ENCODE measurements at regions of chr10 and their contacts with region 1.

Region 1: GRCh38 chr10:9091530-9092093 is 1037.1 kb downstream of the GATA3 start:
- DNase-seq: no peak
- H3K4me3 Mint-ChIP-seq: no peak overlapping the region
- H3K27ac Mint-ChIP-seq: peak overlapping the region; percentile 24
- H3K4me1 Mint-ChIP-seq: peaks cover 49% of the 10 kb centered on the region
- H3K27me3 Mint-ChIP-seq: no peaks in the 10 kb centered on the region

Region 2: GRCh38 chr10:8245131-8245813 is 846.3 kb before region 1 on chr10:
- intact Hi-C with region 1: loop called (anchors 5 kb)
- DNase-seq: no peak
- H3K4me3 Mint-ChIP-seq: peak overlapping the region; percentile 58
- H3K27ac Mint-ChIP-seq: peak overlapping the region; percentile 93
- H3K4me1 Mint-ChIP-seq: peaks cover 76% of the 10 kb centered on the region
- H3K27me3 Mint-ChIP-seq: no peaks in the 10 kb centered on the region

Region 3: GRCh38 chr10:8404391-8405120 is 687.1 kb before region 1 on chr10:
- intact Hi-C with region 1: loop called (anchors 5 kb)
- DNase-seq: peak; percentile 63
- H3K4me3 Mint-ChIP-seq: peak overlapping the region; percentile 75
- H3K27ac Mint-ChIP-seq: peak overlapping the region; percentile 98
- H3K4me1 Mint-ChIP-seq: peaks cover 80% of the 10 kb centered on the region
- H3K27me3 Mint-ChIP-seq: no peaks in the 10 kb centered on the region

Region 4: DNA sequence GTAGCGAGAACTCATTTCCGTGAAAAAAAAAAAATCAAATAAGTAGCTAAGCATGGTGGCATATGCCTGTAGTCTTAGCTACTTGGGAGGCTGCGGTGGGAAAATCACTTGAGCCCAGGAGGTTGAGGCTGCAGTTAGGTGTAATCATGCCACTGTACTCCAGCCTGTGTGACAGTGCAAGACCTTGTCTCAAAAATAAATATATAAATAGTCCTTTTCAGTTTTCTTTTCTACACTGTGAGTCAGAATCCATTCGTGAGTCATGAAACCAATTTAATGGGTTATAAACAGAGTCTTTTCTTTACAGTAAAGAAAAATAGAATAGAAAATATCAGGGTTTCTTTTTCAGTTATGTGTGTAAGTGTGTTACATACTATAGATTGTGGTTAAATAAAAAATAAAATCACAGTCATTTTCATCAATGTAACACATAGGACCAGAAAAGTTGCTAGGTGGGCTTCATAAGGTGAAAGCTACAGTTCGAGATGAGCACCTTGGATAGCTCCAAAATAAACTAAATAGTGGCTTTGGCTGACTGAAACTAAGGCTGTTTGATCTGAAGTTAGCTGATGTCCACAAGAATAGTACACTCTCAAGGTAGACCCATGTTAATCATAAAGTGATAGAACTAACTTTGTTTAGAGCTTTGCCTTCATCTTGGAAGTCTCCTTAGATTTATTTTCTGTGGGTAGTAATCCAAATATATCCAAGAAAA is 256.0 kb before region 1 on chr10:
- intact Hi-C with region 1: loop called (anchors 2 kb)
- DNase-seq: no peak
- H3K4me3 Mint-ChIP-seq: no peak overlapping the region
- H3K27ac Mint-ChIP-seq: no peak overlapping the region
- H3K4me1 Mint-ChIP-seq: peaks cover 36% of the 10 kb centered on the region
- H3K27me3 Mint-ChIP-seq: no peaks in the 10 kb centered on the region

Region 5: DNA sequence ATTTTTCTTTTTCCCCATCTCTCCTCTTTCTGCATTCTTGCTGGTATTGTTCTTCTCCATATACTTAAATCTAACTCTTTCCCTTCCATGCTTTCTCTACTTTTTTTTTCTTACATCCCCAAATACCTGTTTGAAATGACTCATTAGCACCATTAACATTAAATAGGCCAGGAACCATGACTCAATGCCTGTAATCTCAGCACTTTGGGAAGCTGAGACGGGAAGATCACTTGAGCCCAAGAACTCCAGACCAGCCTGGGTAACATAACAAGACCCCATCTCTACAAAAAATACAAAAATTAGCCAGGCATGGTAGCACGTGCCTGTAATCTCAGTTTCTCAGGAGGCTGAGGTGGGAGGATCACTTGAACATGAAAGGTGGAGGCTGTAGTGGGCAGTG is 10.4 kb before region 1 on chr10:
- intact Hi-C with region 1: loop called (anchors 1 kb)
- DNase-seq: no peak
- H3K4me3 Mint-ChIP-seq: peak overlapping the region; percentile 6
- H3K27ac Mint-ChIP-seq: peak overlapping the region; percentile 10
- H3K4me1 Mint-ChIP-seq: peaks cover 44% of the 10 kb centered on the region
- H3K27me3 Mint-ChIP-seq: no peaks in the 10 kb centered on the region

Region 6: DNA sequence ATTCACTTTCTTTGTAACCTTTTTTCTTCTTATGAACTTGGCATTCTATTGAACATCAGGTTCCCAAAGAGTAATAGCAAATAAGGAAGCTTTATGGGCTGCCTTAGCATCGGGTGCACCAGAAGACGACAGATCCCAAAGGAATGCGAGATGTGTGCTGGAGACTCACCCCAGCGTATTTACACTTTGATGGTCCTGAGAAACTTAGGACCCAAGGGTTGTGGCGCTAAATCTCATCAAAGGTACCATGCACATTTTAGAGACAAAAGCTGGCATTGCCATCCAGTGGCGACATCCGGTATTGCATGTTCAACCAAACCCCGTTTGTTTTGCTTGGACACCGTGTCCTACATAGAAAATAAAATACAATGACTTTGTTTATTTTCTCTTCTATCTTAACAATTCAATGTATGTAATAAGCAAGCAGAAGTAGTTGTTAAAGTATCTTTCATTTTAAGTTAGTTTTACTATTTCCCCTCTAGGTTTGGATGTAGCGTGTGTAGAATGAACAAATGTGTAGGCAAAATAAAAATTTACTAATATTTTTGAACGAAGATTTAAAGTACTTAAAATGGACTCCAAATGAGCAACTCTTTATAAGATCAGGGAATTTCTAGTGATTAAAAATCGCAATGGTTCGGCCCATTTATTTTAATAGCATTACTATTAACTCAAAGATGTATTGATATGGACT is 117.6 kb after region 1 on chr10:
- intact Hi-C with region 1: loop called (anchors 1 kb)
- DNase-seq: peak; percentile 60
- H3K4me3 Mint-ChIP-seq: no peak overlapping the region
- H3K27ac Mint-ChIP-seq: peak overlapping the region; percentile 61
- H3K4me1 Mint-ChIP-seq: peaks cover 16% of the 10 kb centered on the region
- H3K27me3 Mint-ChIP-seq: no peaks in the 10 kb centered on the region